Right ventricle myocardium superior (tissue), 1 donor: ENCODE measurements at regions of chr2 and their contacts with region 1.

Region 1: GRCh38 chr2:36355151-36355889 is at the start of gene CRIM1:
- DNase-seq: peak; percentile 93
- ATAC-seq: peak; percentile 82
- total RNA-seq, gene CRIM1: 17.2 TPM

Region 2: DNA sequence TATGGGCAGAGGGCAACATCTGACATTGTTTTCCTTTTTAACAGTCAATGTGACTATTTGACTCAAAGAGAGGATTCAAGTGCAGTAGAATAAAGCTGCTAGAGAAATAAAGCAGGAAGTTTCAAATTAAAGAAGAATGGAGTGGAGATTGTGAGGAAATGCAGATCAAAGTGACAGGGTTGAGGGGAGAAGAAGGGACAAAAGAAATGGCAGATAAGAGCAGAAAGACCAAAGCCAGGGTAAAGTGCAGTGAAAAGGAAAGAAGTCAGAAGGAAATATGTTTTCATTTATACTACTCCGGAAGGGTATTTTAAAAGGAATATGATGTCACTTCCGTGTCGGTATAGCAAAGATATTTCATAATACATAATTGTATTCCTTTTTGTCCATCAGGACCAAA is 297.2 kb before region 1 on chr2:
- intact Hi-C with region 1: no loop called
- DNase-seq: no peak
- ATAC-seq: no peak

Region 3: DNA sequence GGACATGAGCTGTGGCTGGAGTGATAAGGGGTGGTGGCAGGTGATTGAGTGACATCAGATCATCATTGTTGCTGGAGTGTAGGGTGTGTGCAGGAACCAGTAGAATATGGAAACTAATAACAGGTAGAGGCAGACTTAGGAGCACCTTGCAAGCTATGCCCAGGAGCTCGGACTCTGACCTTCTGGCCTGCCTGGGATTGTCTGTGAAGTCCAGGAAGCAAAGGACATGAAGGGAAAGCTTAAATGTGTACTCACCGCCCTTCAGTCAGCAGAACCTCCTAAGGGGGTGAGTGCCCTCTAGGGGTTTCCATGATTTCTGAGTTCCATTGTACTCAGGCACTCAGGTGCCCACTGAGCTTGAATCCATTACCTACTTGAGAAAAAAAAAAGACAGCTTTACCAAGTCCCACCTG is 104.4 kb after region 1 on chr2:
- intact Hi-C with region 1: loop called (anchors 5 kb)
- DNase-seq: no peak
- ATAC-seq: peak; percentile 36

Region 4: GRCh38 chr2:36507408-36507812 is 152.1 kb after region 1 on chr2:
- intact Hi-C with region 1: loop called (anchors 5 kb)
- DNase-seq: no peak
- ATAC-seq: peak; percentile 89

Region 5: DNA sequence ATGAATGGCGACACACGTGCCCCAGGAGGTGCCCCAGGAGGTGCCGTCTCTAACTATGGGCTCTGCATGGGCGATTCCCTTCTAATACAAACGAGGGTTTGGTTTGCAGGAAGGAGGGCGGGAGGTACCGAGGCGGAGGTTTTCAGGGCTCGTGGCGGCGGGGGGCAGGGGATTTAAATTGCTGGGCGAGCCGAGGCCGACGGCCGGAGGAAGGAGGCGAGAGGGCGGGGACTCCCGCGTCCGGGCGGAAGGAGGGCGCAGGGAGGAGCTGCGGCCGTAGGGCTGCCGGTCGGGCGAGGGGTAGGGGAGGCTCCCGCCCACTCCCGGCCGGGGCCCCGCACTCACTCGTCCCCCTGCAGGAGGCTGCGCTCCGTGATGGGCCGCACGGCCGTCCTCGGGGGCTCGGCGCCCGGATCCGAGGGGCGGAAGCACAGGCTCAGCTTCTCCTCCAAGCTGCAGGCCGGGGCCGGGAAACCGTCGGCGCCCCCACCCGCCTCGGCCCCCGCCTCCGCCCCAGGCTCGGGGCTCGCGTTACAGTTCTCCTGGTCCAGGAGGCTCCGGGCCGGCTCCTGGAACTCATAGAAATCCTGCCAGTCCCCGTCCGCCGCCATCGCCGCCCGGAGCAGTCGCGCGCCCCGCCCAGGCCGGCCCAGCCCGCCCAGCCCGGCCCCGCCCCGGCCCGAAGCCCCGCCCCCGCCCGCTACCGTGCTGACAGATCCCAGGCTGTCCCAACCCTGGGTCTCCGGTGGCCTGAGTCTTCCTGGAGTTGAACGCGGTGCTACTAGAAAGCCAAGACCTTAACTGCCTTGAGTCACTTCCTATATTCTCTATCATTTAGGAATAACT is 242.4 kb after region 1 on chr2 and contains the start of gene FEZ2:
- intact Hi-C with region 1: loop called (anchors 10 kb)
- DNase-seq: peak; percentile 86
- ATAC-seq: peak; percentile 99
- total RNA-seq, gene FEZ2: 38.3 TPM

Region 6: DNA sequence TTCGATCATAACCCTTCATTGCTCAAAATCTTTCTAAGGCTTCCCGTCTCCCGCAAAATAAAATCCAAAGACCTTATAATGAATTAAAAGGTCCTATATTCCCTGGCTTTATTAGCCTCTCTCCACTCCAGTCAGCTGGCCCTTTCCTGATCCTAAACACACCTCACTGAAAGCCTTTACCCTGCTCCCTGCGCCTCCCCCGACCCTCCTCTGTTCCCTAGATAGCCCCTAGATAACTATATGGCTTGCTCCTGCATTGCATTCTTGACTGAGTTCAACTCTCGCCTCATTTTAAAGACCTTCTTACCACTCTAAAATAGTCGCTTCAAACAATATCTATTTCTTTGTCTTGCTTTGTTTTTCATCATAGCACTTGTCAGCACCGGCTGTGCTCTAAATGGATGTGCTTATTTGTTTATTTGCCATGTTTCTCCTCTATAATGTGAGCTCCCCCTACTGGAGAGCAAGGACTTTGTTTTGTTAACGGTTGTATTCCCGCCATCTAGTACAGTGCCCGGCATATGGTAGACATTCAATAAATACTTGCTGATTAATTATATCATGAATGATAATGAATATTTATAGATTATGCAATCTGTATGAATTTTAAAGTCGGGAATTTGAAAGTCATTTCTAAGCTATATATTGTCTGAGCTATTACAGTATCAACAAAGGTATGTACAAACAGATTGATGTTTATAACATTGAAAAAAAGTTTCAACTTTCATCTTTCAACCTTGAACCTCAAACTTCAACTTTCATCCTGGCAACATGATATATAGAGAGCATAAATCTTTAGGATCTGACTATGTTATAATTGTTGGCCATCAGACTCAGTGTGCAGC is 308.8 kb after region 1 on chr2:
- intact Hi-C with region 1: loop called (anchors 5 kb)
- DNase-seq: no peak
- ATAC-seq: peak; percentile 90